Transverse colon (tissue), 4 donors: ENCODE measurements at regions of chr10 and their contacts with region 1.

Region 1: DNA sequence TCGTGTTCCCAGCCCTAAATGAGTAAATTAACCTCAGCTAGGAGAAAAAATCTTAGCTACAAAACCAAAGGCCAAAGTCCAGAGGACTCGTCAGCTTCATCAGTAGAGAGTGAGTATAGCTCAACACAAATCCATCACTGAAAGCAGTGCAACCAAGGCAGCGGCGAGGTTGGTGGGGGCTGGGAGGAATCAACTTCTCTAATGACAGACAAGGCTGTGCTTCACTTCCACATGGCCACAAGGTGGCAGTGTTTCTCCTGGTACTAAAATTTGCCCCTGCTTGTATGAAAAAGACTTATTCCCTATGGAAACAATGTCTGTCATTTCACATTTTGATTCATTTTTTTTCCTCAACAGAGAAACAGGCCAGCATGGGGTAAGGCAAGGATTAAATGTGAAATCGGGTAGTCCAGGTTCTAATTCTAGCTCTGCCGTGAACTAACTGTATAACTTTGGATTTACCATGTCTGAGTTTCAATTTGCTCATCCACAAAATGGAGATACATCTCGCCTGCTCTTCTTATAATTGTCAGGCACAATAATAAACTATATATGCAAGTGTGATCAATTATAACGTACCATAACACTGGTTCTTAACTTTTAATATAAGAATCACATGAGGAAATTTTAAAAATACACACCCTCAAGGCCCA is 39.3 kb downstream of the FAS start:
- DNase-seq: peak; percentile 73
- H3K4me3 ChIP-seq: no peak overlapping the region
- H3K27ac ChIP-seq: no peak overlapping the region
- H3K4me1 ChIP-seq: peaks cover 0 to 14% (median 3%) of the 10 kb centered on the region in 4 donors
- H3K27me3 ChIP-seq: no peaks in the 10 kb centered on the region
- CTCF ChIP-seq: peak; percentile 85 to 92 (median 89)
- EP300 ChIP-seq: no peak
- POLR2A ChIP-seq: no peak

Region 2: GRCh38 chr10:88070080-88070880 is 959.6 kb before region 1 on chr10:
- in situ Hi-C with region 1: no loop called
- intact Hi-C with region 1: no loop called
- DNase-seq: no peak
- H3K4me3 ChIP-seq: no peak overlapping the region
- H3K27ac ChIP-seq: no peak overlapping the region
- H3K4me1 ChIP-seq: peaks cover 0 to under 1% (median 0%) of the 10 kb centered on the region in 4 donors
- H3K27me3 ChIP-seq: no peaks in the 10 kb centered on the region
- CTCF ChIP-seq: no peak
- EP300 ChIP-seq: no peak
- POLR2A ChIP-seq: no peak

Region 3: DNA sequence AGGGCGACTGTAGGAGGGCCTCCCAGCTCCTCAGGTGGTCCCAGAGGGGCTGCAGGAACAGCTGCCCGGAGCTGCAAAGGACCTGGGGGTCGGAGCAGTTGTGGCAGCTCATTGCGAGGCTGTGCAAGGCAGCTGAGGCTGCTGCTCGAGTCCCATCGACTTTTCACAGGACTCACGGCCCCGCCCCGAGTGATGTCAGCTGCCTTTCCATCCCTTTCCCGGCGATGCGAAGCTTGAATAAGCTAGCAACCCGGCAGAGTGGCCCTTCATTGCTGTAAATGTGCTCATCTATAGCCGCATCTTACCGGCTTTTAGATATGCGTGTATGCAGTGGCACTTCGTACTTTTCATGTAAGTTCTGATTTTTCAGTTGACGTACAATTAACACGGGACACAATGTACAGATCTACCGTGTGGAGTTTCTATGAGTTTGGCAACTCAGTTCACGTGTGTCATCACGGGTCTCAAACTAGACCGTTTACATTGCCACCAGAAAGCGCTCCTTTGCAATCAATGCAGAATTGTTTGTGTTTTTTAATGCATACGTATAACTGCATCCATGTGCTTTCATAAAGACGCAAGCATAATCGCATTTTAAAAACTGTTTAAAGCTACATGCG is 177.4 kb after region 1 on chr10 and contains the start of gene CH25H:
- in situ Hi-C with region 1: loop called (anchors 5 to 10 kb)
- intact Hi-C with region 1: loop called (anchors 5 kb)
- DNase-seq: peak; percentile 70
- H3K4me3 ChIP-seq: peak within 1 kb of the TSS; percentile 27 to 58 (median 42)
- H3K27ac ChIP-seq: peak within 1 kb of the TSS; percentile 58 to 65 (median 62)
- H3K4me1 ChIP-seq: peaks cover 4 to 22% (median 12%) of the 10 kb centered on the region in 4 donors
- H3K27me3 ChIP-seq: peaks cover 76% of the 10 kb centered on the region
- CTCF ChIP-seq: no peak
- EP300 ChIP-seq: peak; percentile 41
- POLR2A ChIP-seq: peak; percentile 34
- total RNA-seq, gene CH25H: 1.1 to 2.1 TPM in 2 of 4 donors, not detected in the others

Region 4: DNA sequence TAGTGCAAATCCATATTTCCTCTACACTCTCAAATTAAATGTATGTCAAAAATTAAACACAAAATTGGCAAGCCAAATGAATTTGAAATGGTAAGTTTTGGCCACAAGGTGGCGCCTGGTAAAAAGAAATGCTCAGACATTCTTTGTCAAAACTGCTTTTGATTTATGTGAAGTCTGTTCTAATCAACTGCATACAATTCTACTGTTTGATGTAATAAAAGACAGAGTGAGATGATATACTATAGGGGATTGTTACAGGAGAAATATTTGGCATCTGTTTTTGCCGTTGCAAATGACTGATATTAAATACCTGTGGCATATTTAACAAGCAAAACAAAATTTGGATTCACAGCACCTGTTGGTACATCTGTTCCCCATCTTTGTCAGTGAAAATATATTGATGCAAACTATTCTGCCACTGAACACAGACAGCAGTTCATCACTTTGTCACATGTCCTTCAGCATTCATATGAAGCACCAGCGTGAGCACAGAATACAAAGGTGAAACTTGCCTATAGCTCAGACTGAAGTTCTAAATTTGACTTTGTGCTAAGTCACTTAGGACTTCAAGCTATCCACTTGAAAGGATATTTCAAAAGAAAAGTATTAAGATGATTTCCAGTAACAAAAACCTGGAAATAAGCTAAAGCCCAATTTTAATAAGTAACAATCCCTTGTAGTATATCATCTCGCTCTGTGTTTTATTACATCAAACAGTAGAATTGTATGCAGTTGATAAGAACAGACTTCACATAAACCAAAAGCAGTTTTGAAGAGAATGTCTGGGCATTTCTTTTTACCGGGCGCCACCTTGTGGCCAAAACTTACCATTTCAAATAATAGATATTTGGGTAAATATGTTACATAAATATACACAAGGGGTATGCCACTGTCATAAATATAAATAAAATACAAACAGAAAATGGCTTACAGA is 187.4 kb after region 1 on chr10:
- in situ Hi-C with region 1: loop called (anchors 5 to 10 kb)
- intact Hi-C with region 1: no loop called
- DNase-seq: peak; percentile 55
- H3K4me3 ChIP-seq: no peak overlapping the region
- H3K27ac ChIP-seq: peak overlapping the region; percentile 39 to 59 (median 43)
- H3K4me1 ChIP-seq: peaks cover 0 to 13% (median 8%) of the 10 kb centered on the region in 4 donors
- H3K27me3 ChIP-seq: no peaks in the 10 kb centered on the region
- CTCF ChIP-seq: peak; percentile 72 to 83 (median 79)
- EP300 ChIP-seq: no peak
- POLR2A ChIP-seq: no peak

Region 5: GRCh38 chr10:89574368-89574767 is 544.5 kb after region 1 on chr10:
- in situ Hi-C with region 1: no loop called
- intact Hi-C with region 1: loop called (anchors 10 kb)
- DNase-seq: no peak
- H3K4me3 ChIP-seq: no peak overlapping the region
- H3K27ac ChIP-seq: no peak overlapping the region
- H3K4me1 ChIP-seq: no peaks in the 10 kb centered on the region
- H3K27me3 ChIP-seq: no peaks in the 10 kb centered on the region
- CTCF ChIP-seq: no peak
- EP300 ChIP-seq: no peak
- POLR2A ChIP-seq: no peak